ENCODE measurements at regions of chr6 and their contacts with region 1.

Region 1: GRCh38 chr6:81938014-81938856 is 185.8 kb upstream of the TENT5A start:
- DNase-seq: peak; percentile 42
- ATAC-seq: peak; percentile 90
- H3K4me3 ChIP-seq: no peak overlapping the region
- H3K27ac ChIP-seq: no peak overlapping the region
- H3K4me1 ChIP-seq: no peaks in the 10 kb centered on the region
- H3K27me3 ChIP-seq: no peaks in the 10 kb centered on the region
- CTCF ChIP-seq: no peak
- EP300 ChIP-seq: peak in 1 of 2 experiments; percentile 30; a peak in 1 of 4 replicates
- POLR2A ChIP-seq: no peak
- RAD21 ChIP-seq: no peak

Region 2: DNA sequence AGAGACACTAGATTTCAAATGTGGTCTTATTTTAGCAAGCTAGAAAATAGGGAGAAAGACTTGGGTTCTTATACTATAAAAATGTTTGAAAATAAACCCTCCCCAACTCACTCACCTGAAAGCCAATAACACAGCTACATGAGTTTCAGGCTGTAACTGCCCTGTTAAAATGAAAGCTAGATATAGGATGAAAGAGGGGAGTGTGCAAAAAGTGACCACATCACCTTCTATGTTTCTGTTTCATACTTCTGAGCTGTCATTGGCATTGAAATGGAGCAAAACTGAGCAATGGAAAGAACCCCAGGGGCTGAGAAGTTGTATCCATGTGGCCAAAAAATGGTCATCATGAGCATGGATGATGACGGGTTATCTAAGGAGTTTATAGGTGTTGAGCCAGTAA is 37.6 kb before region 1 on chr6:
- CTCF ChIA-PET with region 1: interaction called, 6 read pairs
- POLR2A ChIA-PET with region 1: interaction called, 3 read pairs
- RAD21 ChIA-PET with region 1: interaction called, 7 read pairs
- SMC1A ChIA-PET with region 1: interaction called, 12 read pairs
- in situ Hi-C with region 1: no loop called
- intact Hi-C with region 1: no loop called
- DNase-seq: no peak
- ATAC-seq: peak; percentile 70
- H3K4me3 ChIP-seq: no peak overlapping the region
- H3K27ac ChIP-seq: no peak overlapping the region
- H3K4me1 ChIP-seq: no peaks in the 10 kb centered on the region
- H3K27me3 ChIP-seq: no peaks in the 10 kb centered on the region
- CTCF ChIP-seq: no peak
- EP300 ChIP-seq: no peak
- POLR2A ChIP-seq: no peak
- RAD21 ChIP-seq: no peak

Region 3: DNA sequence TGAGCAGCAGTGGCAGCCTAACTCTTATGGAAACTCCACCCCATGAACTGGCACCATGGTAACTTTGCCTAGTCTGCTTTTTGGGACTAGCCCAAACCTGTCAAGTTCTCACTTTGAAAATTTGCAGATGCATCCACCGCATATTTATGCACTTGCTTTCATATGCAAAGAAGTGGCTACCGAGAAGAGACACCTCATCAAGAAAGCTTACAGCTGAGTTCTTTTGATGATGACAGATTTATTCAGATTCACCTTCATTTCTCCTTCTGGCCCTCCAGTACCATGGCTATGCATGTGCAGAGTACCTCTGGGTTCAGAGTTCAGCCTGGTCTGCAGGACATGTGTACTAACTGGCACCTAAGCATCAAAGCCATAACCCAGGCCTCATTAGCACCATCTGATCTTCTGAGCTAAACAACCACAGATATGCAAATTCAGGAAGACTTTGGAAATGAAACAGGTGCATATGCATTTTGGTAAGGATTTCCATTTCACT is 31.5 kb before region 1 on chr6:
- CTCF ChIA-PET with region 1: interaction called, 4 read pairs
- POLR2A ChIA-PET with region 1: interaction called, 15 read pairs
- RAD21 ChIA-PET with region 1: interaction called, 13 read pairs
- SMC1A ChIA-PET with region 1: interaction called, 22 read pairs
- in situ Hi-C with region 1: no loop called
- intact Hi-C with region 1: no loop called
- DNase-seq: peak; percentile 44
- ATAC-seq: peak; percentile 54
- H3K4me3 ChIP-seq: no peak overlapping the region
- H3K27ac ChIP-seq: no peak overlapping the region
- H3K4me1 ChIP-seq: no peaks in the 10 kb centered on the region
- H3K27me3 ChIP-seq: no peaks in the 10 kb centered on the region
- CTCF ChIP-seq: no peak
- EP300 ChIP-seq: 0 out of 4 replicates have a peak, but pooled peaks of 1 of the 2 experiments have one; percentile 5
- POLR2A ChIP-seq: no peak
- RAD21 ChIP-seq: no peak

Region 4: DNA sequence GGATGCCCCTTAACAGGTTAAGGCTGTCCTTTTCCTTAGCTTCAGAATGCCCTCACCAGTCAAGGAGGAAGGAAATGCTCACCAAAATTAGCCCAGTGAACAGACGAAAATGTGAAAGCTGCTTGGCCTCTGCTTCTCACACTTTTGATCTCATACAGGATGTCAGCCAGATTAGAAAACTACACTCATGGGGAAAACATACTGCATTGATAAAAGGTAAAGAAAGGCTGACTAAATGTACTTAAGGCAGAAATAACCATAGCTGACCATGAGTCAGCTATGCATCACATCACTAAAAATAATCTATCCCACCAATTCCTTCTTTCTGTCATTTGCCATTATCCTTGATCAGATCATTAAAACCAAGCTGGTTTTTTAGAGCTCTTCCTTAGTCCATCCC is 12.6 kb after region 1 on chr6:
- CTCF ChIA-PET with region 1: interaction called, 14 read pairs
- POLR2A ChIA-PET with region 1: interaction called, 25 read pairs
- RAD21 ChIA-PET with region 1: interaction called, 20 read pairs
- SMC1A ChIA-PET with region 1: interaction called, 63 read pairs
- in situ Hi-C with region 1: no loop called
- intact Hi-C with region 1: no loop called
- DNase-seq: peak; percentile 54
- ATAC-seq: no peak
- H3K4me3 ChIP-seq: no peak overlapping the region
- H3K27ac ChIP-seq: no peak overlapping the region
- H3K4me1 ChIP-seq: no peaks in the 10 kb centered on the region
- H3K27me3 ChIP-seq: no peaks in the 10 kb centered on the region
- CTCF ChIP-seq: no peak
- EP300 ChIP-seq: no peak
- POLR2A ChIP-seq: no peak
- RAD21 ChIP-seq: no peak

Region 5: GRCh38 chr6:81997091-81997926 is 59.1 kb after region 1 on chr6:
- CTCF ChIA-PET with region 1: no interaction called
- POLR2A ChIA-PET with region 1: interaction called, 4 read pairs
- RAD21 ChIA-PET with region 1: interaction called, 8 read pairs
- SMC1A ChIA-PET with region 1: interaction called, 15 read pairs
- in situ Hi-C with region 1: no loop called
- intact Hi-C with region 1: no loop called
- DNase-seq: peak; percentile 57
- ATAC-seq: peak; percentile 74
- H3K4me3 ChIP-seq: no peak overlapping the region
- H3K27ac ChIP-seq: no peak overlapping the region
- H3K4me1 ChIP-seq: peaks cover 5% of the 10 kb centered on the region
- H3K27me3 ChIP-seq: no peaks in the 10 kb centered on the region
- CTCF ChIP-seq: no peak
- EP300 ChIP-seq: peak; percentile 37 to 63; a peak in 2 of 4 replicates
- POLR2A ChIP-seq: no peak
- RAD21 ChIP-seq: no peak

Region 6: GRCh38 chr6:82144007-82144851 is 206.0 kb after region 1 on chr6:
- CTCF ChIA-PET with region 1: no interaction called
- POLR2A ChIA-PET with region 1: no interaction called
- RAD21 ChIA-PET with region 1: no interaction called
- SMC1A ChIA-PET with region 1: no interaction called
- in situ Hi-C with region 1: no loop called
- intact Hi-C with region 1: no loop called
- DNase-seq: peak; percentile 26
- ATAC-seq: peak; percentile 89
- H3K4me3 ChIP-seq: no peak overlapping the region
- H3K27ac ChIP-seq: no peak overlapping the region
- H3K4me1 ChIP-seq: peaks cover 4% of the 10 kb centered on the region
- H3K27me3 ChIP-seq: no peaks in the 10 kb centered on the region
- CTCF ChIP-seq: no peak
- EP300 ChIP-seq: no peak
- POLR2A ChIP-seq: no peak
- RAD21 ChIP-seq: no peak

Measured in GM12878 (cell line).